ENCODE measurements at regions of chr9 and their contacts with region 1.

Region 1: GRCh38 chr9:70258692-70259511 is at the start of gene SMC5:
- DNase-seq: peak; percentile 82
- ATAC-seq: peak; percentile 64
- H3K4me3 ChIP-seq: peak within 1 kb of the TSS; percentile 97
- H3K27ac ChIP-seq: peak within 1 kb of the TSS; percentile 95
- H3K4me1 ChIP-seq: peaks cover 67% of the 10 kb centered on the region
- H3K27me3 ChIP-seq: no peaks in the 10 kb centered on the region
- CTCF ChIP-seq: no peak
- total RNA-seq, gene SMC5: 15.1 and 22.5 TPM in 2 replicates

Region 2: DNA sequence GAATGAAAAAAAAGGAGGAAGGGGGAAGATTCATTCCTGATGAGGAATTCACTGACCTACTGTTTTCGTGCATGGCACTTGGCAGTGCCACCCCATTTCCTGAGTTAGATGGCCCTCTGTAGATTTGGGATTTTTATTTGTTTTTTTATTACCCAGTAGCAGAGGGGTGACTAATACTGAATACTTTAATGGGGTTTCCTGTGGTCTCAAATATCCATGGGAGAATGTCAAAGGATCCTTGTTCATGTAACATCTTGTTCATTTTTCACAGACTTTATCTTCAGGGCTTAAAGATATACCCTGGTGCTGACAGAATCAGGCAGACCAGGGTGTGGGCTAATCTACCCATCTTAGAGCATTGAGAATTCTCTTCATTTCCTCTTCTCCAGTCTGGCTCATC is 122.3 kb before region 1 on chr9:
- CTCF ChIA-PET with region 1: no interaction called
- POLR2A ChIA-PET with region 1: no interaction called
- intact Hi-C with region 1: loop called (anchors 5 kb)
- DNase-seq: peak; percentile 76
- ATAC-seq: peak; percentile 91
- H3K4me3 ChIP-seq: no peak overlapping the region
- H3K27ac ChIP-seq: peak overlapping the region; percentile 64
- H3K4me1 ChIP-seq: peaks cover 13% of the 10 kb centered on the region
- H3K27me3 ChIP-seq: no peaks in the 10 kb centered on the region
- CTCF ChIP-seq: no peak

Region 3: GRCh38 chr9:70285246-70285645 is 26.3 kb after region 1 on chr9:
- CTCF ChIA-PET with region 1: no interaction called
- POLR2A ChIA-PET with region 1: no interaction called
- intact Hi-C with region 1: no loop called
- DNase-seq: no peak
- ATAC-seq: no peak
- H3K4me3 ChIP-seq: no peak overlapping the region
- H3K27ac ChIP-seq: no peak overlapping the region
- H3K4me1 ChIP-seq: no peaks in the 10 kb centered on the region
- H3K27me3 ChIP-seq: no peaks in the 10 kb centered on the region
- CTCF ChIP-seq: no peak

Region 4: DNA sequence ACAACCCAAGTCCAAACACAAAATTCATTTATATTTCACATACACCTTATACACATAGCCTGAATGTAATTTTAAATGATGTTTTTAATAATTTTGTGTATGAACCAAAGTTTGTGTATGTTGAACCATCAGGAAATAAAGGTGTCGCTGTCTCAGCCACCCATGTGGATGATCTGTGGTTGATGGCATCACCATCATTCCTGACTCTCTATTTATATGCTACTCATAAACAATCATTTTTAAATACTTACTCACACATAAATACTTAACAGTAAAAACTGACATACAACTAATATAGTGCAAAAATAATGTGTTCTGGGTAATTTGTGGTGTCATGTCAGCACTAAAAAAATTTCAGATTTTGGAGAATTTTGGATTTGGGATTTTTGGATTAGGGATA is 38.2 kb after region 1 on chr9:
- CTCF ChIA-PET with region 1: no interaction called
- POLR2A ChIA-PET with region 1: interaction called, 5 read pairs
- intact Hi-C with region 1: loop called (anchors 5 kb)
- DNase-seq: no peak
- ATAC-seq: peak; percentile 59
- H3K4me3 ChIP-seq: no peak overlapping the region
- H3K27ac ChIP-seq: no peak overlapping the region
- H3K4me1 ChIP-seq: peaks cover 4% of the 10 kb centered on the region; the same call in 1 of the 2 replicates
- H3K27me3 ChIP-seq: no peaks in the 10 kb centered on the region
- CTCF ChIP-seq: no peak

Region 5: DNA sequence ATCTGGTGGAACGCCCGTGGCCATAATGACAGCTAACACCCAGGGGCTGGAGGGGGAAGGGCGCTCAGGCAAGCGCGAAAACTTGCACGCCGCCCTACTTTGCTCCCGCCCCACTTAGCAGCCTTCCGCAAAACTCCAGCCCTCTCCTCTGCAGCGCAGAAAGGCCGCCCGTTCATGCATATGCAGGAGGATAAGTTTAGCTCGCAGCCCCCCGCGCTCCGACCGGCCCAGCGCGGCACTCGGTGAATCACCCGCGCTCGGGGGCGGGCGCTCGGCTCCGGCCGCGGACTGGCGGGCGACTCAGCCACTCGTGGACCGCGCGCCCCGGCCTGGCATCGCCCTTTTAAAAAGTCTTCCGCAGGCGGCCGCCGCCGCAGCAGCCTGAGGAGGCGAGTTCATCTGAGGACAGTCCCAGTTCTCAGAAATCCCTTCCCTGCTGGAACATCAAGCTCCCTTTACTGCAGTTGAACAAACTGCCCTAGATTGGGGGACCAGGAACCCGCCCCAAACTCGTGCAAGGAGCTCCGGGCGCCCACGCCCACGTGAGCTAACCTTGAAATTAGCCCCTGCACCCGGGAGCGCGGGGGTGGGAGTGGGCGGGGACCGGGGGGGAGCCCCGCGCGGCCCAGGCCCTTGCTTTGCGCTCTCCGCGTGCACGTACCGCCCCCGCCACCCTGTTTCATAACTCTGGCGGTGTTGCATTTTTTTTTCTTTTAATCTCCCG is 160.1 kb after region 1 on chr9:
- CTCF ChIA-PET with region 1: no interaction called
- POLR2A ChIA-PET with region 1: no interaction called
- intact Hi-C with region 1: loop called (anchors 5 kb)
- DNase-seq: peak; percentile 81
- ATAC-seq: peak; percentile 55
- H3K4me3 ChIP-seq: peak overlapping the region; percentile 67
- H3K27ac ChIP-seq: peak overlapping the region; percentile 75
- H3K4me1 ChIP-seq: peaks cover 28% of the 10 kb centered on the region
- H3K27me3 ChIP-seq: peaks cover 13% of the 10 kb centered on the region
- CTCF ChIP-seq: no peak

Measured in PC-3 (cell line).